A549 (cell line): ENCODE measurements at regions of chr7 and their contacts with region 1.

Region 1: GRCh38 chr7:11212080-11212711 is 238.5 kb downstream of the PHF14 start:
- DNase-seq: peak; percentile 25 to 75
- ATAC-seq: peak; percentile 80 to 95
- H3K4me3 ChIP-seq: no peak overlapping the region
- H3K27ac ChIP-seq: no peak overlapping the region
- H3K4me1 ChIP-seq: 0 out of 3 replicates have a peak, but pooled peaks cover 5% of the 10 kb centered on the region
- CTCF ChIP-seq: peak; percentile 82
- EP300 ChIP-seq: no peak
- POLR2A ChIP-seq: no peak
- RAD21 ChIP-seq: peak; percentile 72 to 73

Region 2: GRCh38 chr7:10950494-10950893 is 261.7 kb before region 1 on chr7:
- CTCF ChIA-PET with region 1: no interaction called
- POLR2A ChIA-PET with region 1: no interaction called
- DNase-seq: no peak
- ATAC-seq: no peak
- H3K4me3 ChIP-seq: no peak overlapping the region
- H3K27ac ChIP-seq: no peak overlapping the region
- H3K4me1 ChIP-seq: no peaks in the 10 kb centered on the region
- CTCF ChIP-seq: no peak
- EP300 ChIP-seq: no peak
- POLR2A ChIP-seq: no peak
- RAD21 ChIP-seq: no peak

Region 3: GRCh38 chr7:11193888-11194287 is 18.3 kb before region 1 on chr7:
- CTCF ChIA-PET with region 1: interaction called, 23 read pairs
- POLR2A ChIA-PET with region 1: no interaction called
- DNase-seq: no peak
- ATAC-seq: no peak
- H3K4me3 ChIP-seq: no peak overlapping the region
- H3K27ac ChIP-seq: no peak overlapping the region
- H3K4me1 ChIP-seq: peaks cover 6% of the 10 kb centered on the region; the same call in 1 of the 3 replicates
- CTCF ChIP-seq: no peak
- EP300 ChIP-seq: no peak
- POLR2A ChIP-seq: no peak
- RAD21 ChIP-seq: no peak

Region 4: GRCh38 chr7:11228515-11228914 is 16.3 kb after region 1 on chr7:
- CTCF ChIA-PET with region 1: interaction called, 22 read pairs
- POLR2A ChIA-PET with region 1: no interaction called
- DNase-seq: no peak
- ATAC-seq: no peak
- H3K4me3 ChIP-seq: no peak overlapping the region
- H3K27ac ChIP-seq: no peak overlapping the region
- H3K4me1 ChIP-seq: no peaks in the 10 kb centered on the region
- CTCF ChIP-seq: no peak
- EP300 ChIP-seq: no peak
- POLR2A ChIP-seq: no peak
- RAD21 ChIP-seq: no peak

Region 5: DNA sequence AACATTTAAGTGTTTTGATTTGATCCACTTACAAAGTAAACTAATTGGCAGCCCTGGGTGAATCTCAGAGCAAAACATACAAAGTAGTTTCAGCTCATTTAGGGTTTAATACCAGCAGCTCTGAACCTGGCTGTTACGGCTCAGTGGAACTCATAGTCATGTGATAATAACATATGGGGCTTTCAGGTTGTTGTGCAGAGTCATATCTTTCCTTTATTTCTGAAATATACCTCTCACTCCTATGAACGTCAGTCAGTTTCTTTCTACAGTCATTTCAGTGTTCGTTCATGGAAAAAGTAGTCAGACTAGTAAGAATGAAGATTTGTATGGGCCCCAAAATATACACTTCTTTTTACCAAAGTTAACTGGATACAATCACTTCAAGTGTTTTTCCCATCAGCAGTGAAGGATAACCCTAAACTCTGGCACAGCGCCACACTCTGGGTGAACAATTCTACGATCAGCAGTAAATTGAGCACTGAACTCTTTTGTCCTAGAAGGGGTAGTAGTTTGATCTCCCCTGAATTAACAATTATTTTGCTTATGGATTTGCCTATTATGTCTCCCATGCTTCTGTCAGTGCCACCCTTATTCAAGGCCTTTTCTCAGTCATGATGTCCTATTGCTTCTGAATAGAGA is 401.2 kb after region 1 on chr7:
- CTCF ChIA-PET with region 1: no interaction called
- POLR2A ChIA-PET with region 1: no interaction called
- DNase-seq: no peak
- ATAC-seq: no peak
- H3K4me3 ChIP-seq: no peak overlapping the region
- H3K27ac ChIP-seq: no peak overlapping the region
- H3K4me1 ChIP-seq: peaks cover 17% of the 10 kb centered on the region; the same call in 2 of the 3 replicates
- CTCF ChIP-seq: no peak
- EP300 ChIP-seq: no peak
- POLR2A ChIP-seq: no peak
- RAD21 ChIP-seq: no peak